Aorta (tissue), 5 donors: ENCODE measurements at regions of chr2 and their contacts with region 1.

Region 1: DNA sequence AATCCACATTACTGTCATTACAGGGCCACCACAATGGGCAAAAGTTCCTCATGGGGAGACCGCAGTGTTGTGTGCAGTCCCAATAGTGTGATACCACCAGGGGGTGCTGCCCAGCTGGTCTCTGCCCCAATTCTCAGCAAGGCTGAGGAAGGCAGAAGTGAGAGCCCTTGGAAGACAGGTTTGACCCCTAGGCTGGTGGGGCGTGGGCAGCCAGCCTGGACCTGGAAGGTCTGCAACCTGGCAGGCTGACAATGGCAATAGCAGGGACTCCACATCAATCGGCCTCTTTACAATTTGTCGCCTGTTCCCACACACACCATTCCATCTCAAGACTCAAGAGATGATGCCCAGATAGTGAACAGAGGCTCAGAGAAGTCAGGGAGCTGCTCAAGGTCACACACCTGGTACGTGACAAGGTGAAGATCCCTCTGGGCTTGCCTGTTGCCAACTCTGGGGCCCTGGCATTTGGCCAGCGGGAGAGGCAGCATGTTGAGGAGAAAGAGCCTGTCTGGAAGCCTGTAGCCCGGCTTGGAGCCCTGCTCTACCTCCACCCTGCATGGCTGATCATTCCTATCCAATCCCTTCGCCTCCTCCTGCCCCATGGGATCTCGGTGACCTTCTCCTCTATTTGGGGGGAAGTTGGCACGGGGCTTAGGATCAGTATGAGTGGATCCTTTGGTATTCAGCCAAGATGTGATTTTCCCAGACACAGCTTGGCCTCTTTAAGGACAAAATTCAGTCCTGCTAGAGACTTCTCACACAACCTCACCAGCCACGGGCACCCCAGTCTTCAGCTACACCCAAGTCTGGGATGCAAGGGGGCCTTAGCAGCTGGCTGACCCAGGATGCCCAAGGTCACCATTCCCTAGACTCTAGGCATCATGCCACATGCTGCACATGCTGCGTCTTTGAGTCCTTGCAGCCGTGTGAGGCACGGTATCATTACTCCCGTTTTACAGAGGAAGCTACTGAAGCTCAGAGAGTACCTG is 2.9 kb upstream of the ATOH8 start:
- DNase-seq: peak; percentile 88 to 90
- ATAC-seq: peak; percentile 60
- H3K4me3 ChIP-seq: no peak overlapping the region
- H3K27ac ChIP-seq: peak overlapping the region in 1 of 2 donors; percentile 57
- H3K4me1 ChIP-seq: peaks cover 0 to 3% of the 10 kb centered on the region in 2 donors
- H3K27me3 ChIP-seq: no peaks in the 10 kb centered on the region

Region 2: DNA sequence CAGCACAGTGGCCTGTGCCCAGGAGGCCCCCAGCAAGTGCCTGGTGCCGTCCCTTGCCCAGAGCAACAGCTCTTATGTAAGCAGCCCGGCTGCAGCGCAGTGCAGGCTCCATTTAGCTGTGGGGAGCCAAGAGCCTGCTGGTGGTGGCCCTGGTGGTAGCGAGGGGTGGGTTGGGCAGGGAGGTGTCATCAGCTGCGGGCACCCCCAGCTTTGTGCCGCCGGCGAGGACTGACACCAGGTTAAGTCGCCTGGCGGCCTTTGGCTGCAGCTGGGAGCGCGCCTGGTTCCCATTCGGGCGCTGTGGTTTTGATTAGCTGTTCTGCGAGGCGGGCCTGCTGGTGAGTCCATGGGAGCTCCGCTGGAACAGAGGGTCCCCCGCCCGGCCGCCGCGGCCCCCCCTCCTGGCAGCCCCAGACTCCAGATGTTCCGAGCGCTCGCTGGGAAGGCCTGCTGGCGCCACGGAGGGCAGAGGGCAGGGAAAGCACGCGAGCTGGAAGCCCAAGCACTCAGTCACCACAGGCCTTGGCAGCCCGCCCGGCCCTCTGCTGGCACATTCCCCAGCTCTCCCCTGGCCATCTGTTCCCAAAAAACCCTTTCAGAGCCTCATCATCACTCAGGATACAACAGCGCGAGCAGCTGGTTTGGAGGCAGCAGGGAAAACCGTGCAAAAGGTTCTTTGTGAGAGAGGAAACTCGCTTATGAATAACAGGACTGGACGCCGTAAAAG is 21.3 kb after region 1 on chr2:
- intact Hi-C with region 1: loop called (anchors 2 kb)
- DNase-seq: peak; percentile 98 to 100
- ATAC-seq: peak; percentile 95
- H3K4me3 ChIP-seq: no peak overlapping the region
- H3K27ac ChIP-seq: peak overlapping the region in 1 of 2 donors; percentile 86
- H3K4me1 ChIP-seq: peaks cover 9 to 13% of the 10 kb centered on the region in 2 donors
- H3K27me3 ChIP-seq: no peaks in the 10 kb centered on the region

Region 3: GRCh38 chr2:85792783-85793441 is 42.0 kb after region 1 on chr2:
- intact Hi-C with region 1: loop called (anchors 5 kb)
- DNase-seq: peak; percentile 53 to 81
- ATAC-seq: peak; percentile 42
- H3K4me3 ChIP-seq: no peak overlapping the region
- H3K27ac ChIP-seq: peak overlapping the region; percentile 4 to 99
- H3K4me1 ChIP-seq: peaks cover 0 to 3% of the 10 kb centered on the region in 2 donors
- H3K27me3 ChIP-seq: no peaks in the 10 kb centered on the region

Region 4: DNA sequence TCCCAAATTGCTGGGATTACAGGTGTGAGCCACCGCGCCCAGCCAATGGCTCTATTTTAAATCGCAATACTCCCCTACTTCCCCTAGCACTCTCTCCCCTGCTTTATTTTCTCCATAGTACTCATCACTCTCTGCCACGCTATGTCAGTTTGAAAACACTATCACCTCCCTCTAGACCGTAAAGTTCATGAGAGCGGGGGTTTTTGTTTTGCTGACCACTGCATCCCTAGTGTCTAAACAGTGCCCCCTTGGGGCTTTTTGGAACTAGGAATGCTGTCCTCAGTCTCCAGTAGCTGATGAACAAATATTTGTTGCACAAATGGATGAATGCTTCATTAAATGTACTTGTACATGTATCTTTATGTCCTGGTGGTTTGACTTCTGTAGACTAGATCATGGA is 47.0 kb after region 1 on chr2:
- intact Hi-C with region 1: loop called (anchors 5 kb)
- DNase-seq: peak in 1 of 2 donors; percentile 4
- ATAC-seq: no peak
- H3K4me3 ChIP-seq: no peak overlapping the region
- H3K27ac ChIP-seq: peak overlapping the region in 1 of 2 donors; percentile 11
- H3K4me1 ChIP-seq: no peaks in the 10 kb centered on the region
- H3K27me3 ChIP-seq: no peaks in the 10 kb centered on the region

Region 5: GRCh38 chr2:85813982-85814801 is 63.3 kb after region 1 on chr2:
- intact Hi-C with region 1: loop called (anchors 1 to 5 kb)
- DNase-seq: peak; percentile 94 to 98
- ATAC-seq: peak; percentile 94
- H3K4me3 ChIP-seq: no peak overlapping the region
- H3K27ac ChIP-seq: no peak overlapping the region
- H3K4me1 ChIP-seq: peaks cover 0 to 3% of the 10 kb centered on the region in 2 donors
- H3K27me3 ChIP-seq: no peaks in the 10 kb centered on the region

Region 6: DNA sequence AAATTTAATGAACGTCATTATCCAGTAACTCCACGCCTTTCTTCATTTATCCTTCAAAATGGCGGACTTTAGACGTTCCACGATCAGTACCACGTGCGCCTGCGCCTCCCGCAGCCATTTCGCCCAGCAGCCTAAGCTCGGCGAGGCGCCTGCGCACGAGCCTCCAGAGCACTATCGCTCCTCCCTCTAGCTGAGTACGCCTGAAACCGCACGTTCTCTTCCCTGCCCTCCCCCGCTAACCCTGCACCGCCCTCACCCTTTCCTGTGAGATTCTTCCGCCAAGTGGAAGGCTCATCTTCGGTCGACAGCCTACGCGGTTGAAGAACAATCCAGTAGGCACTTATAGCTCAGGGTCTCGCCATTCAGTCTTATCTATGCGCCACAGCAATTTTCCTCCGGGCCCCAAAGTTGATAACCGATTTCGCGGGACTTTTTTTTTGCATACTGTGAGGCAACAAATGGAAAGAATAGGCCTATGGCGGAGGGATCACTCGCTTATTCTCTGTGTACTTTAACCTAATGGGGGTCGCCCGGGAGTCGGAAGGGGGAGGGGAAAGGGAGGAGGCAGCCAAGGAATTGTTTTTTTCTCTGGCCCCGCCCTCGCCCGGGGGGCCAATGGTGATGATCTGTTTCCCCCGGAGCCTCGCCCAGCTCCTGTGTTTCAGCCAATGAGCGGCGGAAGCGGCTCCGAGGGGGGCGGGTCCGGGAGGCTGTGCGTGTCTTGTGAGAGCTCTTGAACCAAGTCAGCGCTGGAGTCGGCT is 689.9 kb after region 1 on chr2 and contains the start of gene KDM3A:
- intact Hi-C with region 1: no loop called
- DNase-seq: peak; percentile 100
- ATAC-seq: peak; percentile 97
- H3K4me3 ChIP-seq: peak within 1 kb of the TSS; percentile 94 to 97
- H3K27ac ChIP-seq: peak within 1 kb of the TSS; percentile 95 to 99
- H3K4me1 ChIP-seq: peaks cover 5 to 12% of the 10 kb centered on the region in 2 donors
- H3K27me3 ChIP-seq: no peaks in the 10 kb centered on the region
- total RNA-seq, gene KDM3A: 44.9 to 75.3 TPM